Activated CD8-positive, alpha-beta memory T cell treated with anti-CD3 and anti-CD28 coated beads, Interleukin-2, amount 10 ng/mL, durations not matched to agents 7 days and 5 days (primary cell): ENCODE measurements at regions of chr12 and their contacts with region 1.

Region 1: DNA sequence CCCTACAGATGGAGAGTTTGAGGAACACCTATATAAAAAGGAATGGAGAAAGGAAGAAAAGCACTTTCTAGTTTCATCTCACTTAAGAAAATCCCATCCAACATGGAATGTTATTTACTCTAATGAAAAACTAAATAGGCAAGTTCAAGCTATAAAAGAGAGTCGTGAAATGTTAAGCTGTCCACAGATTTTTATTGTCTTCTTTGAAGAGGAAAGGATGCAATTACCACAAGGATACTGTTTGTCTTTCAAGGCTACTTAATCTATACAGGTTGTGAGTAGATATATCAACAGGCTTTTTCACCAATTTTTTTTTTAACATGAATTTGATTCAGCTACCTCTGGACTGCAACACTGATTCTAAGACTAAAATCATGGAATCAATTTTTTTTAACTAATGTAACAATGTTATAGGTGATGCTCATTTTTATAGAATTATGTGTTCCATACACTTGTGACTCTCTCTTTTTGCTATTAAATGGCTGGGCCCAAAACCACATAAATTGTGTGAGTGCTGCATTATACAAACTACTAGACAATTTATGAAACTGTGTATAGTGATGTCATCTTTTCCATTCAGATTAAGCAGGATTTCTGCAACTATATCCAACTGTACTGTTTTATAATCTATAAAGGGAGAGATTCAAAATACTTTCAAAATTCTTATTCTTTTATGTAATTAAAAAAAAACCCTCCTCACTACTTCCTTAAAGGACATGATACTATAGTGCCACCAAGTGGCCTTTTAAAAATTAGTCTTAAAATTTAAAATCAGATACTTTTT is 26.8 kb upstream of the BMAL2 start:
- DNase-seq: no peak
- ATAC-seq: no peak
- H3K4me3 Mint-ChIP-seq: no peak overlapping the region
- H3K27ac Mint-ChIP-seq: no peak overlapping the region
- H3K4me1 Mint-ChIP-seq: peaks cover 26% of the 10 kb centered on the region
- H3K27me3 Mint-ChIP-seq: no peaks in the 10 kb centered on the region

Region 2: DNA sequence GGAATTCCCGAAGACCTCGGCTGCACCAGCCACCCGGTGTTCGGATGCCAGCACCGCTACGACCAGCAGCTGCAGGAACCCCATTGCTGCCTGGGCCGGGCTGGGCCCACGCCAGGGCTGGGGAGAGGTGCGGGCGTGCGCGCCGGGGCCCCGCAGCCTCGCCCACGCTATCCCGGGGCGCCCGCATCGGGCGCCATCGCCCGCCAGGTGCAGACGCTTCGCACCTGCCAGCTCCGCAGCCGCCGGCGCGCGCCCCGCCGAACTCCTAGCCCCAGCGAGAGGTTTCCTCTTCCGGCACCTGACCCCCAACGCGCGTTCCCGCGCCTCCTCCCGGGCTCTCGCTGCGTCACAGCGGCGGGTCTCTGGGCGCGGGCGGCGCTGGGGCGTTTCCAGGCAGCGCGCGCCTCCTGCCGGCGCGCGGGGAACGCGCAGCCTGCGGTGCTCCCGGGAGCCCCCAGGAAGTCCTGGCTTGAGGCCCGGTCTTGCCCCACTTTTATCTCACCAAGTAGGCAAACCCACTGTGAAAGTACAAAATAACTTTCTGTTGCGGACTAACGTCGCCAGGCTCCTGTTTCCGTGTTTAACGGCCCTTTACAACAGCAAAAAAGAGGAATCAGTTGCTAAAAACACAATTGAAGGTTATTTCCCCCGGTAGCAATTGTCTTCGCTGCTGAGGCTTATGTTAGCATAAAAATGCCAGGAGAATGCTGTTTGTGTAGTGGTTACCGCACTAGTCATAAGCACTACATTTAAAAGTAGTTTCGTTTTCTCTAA is 291.6 kb before region 1 on chr12 and contains the start of gene TM7SF3:
- CTCF ChIA-PET with region 1: interaction called, 77 read pairs
- DNase-seq: peak; percentile 97
- ATAC-seq: peak; percentile 89
- H3K4me3 Mint-ChIP-seq: peak within 1 kb of the TSS; percentile 91
- H3K27ac Mint-ChIP-seq: peak within 1 kb of the TSS; percentile 94
- H3K4me1 Mint-ChIP-seq: peaks cover 61% of the 10 kb centered on the region
- H3K27me3 Mint-ChIP-seq: no peaks in the 10 kb centered on the region
- total RNA-seq, gene TM7SF3: 41.4 to 45.1 TPM

Region 3: DNA sequence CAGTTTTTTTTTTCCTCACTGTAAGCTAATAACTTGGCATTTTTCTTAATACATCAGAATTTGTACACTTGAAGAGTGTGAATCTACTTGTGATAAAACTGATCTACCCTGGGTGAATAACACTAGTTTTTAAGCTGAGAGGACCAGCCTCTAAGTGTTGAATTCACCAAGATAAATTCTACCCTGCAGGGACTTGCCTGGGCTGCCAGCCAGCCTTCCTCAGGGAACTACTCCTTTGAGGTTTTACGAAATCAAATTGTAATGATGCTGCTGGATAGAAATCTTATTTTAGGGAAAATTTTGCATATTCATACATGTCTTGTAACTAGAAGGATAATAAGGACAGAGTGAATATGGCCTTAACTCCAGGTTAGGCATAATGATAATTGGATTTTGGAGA is 281.6 kb before region 1 on chr12:
- CTCF ChIA-PET with region 1: interaction called, 31 read pairs
- DNase-seq: no peak
- ATAC-seq: no peak
- H3K4me3 Mint-ChIP-seq: no peak overlapping the region
- H3K27ac Mint-ChIP-seq: no peak overlapping the region
- H3K4me1 Mint-ChIP-seq: peaks cover 33% of the 10 kb centered on the region
- H3K27me3 Mint-ChIP-seq: peaks cover 2% of the 10 kb centered on the region

Region 4: DNA sequence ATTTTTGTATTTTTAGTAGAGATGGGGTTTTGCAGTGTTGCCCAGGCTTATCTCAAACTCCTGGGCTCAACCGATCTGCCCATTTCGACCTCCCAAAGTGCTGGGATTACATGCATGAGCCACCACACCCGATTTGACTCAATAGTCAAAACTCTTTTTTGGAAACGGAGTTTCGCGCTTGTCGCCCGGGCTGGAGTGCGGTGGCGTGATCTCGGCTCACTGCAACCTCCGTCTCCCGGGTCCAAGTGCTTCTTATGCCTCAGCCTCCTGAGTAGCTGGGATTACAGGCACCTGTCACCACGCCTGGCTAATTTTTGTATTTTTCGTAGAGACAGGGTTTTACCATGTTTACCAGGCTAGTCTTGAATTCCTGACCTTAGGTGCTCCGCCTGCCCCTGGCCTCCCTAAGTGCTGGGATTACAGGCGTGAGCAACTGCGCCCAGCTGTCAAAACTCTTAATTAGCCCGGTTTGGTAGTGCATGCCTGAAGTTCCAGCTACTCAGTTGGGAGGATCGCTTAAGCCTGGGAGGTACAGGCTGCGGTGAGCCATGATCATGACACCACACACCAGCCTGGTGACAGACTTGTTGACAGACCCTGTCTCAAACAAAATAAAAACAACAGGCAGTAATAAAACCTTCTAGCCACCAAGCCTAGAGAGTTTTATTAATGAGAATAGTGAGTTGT is 271.1 kb before region 1 on chr12:
- CTCF ChIA-PET with region 1: interaction called, 25 read pairs
- DNase-seq: no peak
- ATAC-seq: no peak
- H3K4me3 Mint-ChIP-seq: no peak overlapping the region
- H3K27ac Mint-ChIP-seq: no peak overlapping the region
- H3K4me1 Mint-ChIP-seq: peaks cover 4% of the 10 kb centered on the region
- H3K27me3 Mint-ChIP-seq: no peaks in the 10 kb centered on the region

Region 5: GRCh38 chr12:27226407-27226929 is 79.4 kb before region 1 on chr12:
- CTCF ChIA-PET with region 1: no interaction called
- DNase-seq: no peak
- ATAC-seq: no peak
- H3K4me3 Mint-ChIP-seq: no peak overlapping the region
- H3K27ac Mint-ChIP-seq: no peak overlapping the region
- H3K4me1 Mint-ChIP-seq: peaks cover under 1% of the 10 kb centered on the region
- H3K27me3 Mint-ChIP-seq: peaks cover 4% of the 10 kb centered on the region

Region 6: DNA sequence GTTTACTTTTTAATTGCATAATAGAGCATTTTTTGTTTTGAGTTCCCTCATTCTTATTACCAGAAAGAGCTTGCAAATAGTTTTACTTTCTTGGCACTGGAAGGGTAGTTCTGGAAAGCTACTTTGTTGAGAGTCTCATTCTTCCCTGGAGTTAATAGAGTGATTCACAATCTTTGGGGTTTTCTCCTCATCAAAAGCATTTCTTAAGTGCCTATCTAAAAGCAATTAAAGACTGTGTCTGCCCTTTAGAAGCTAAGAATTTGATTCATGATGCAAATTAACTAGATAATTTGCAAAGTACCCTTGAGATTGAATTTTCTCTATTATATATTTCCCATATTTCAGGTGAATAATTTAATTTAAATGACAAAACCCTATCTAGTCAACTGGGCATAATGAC is 18.7 kb after region 1 on chr12:
- CTCF ChIA-PET with region 1: interaction called, 41 read pairs
- DNase-seq: no peak
- ATAC-seq: no peak
- H3K4me3 Mint-ChIP-seq: no peak overlapping the region
- H3K27ac Mint-ChIP-seq: no peak overlapping the region
- H3K4me1 Mint-ChIP-seq: no peaks in the 10 kb centered on the region
- H3K27me3 Mint-ChIP-seq: no peaks in the 10 kb centered on the region

Region 7: DNA sequence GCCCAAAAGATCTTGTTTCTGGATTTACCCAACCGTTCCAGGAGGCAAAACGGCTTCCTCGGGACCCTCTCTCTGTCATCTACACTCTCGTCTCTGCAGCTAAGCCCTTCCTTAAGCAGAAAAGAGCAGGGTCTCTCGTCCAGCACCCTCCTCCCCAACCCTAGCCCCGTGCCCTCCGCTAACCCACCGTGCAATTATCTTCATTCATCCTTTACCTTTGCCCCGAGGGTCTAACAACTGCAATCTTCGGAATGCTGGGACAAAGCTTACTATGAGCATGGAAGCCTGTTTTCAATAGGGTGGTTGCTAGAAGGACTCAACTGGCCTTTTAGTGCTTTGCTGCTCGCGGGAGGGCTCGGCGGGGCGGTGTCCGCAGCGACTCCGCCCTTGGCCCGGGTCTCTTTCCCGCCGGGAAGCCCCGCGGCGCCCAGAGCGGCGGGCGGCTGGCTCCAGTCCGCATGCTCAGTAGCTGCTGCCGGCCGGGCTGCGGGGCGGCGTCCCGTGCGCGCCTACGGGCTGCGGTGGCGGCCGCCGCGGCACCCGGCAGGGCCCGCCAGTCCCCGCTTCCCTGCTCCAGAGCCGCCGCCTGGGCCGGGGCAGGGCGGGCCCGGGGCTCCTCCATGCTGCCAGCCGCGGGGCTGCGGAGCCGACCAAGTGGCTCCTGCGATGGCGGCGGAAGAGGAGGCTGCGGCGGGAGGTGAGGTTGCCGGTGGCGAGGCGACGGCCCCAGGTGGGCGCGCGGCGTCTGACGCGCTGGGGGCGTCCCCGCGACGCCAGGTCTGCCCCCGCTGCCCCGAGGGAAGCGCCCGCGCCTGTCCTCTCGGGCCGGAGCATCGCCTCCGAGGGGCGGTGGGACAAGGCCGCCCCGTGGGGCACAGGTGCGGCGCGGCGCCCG is 26.8 kb after region 1 on chr12 and contains the start of gene BMAL2:
- CTCF ChIA-PET with region 1: interaction called, 41 read pairs
- DNase-seq: peak; percentile 59
- ATAC-seq: peak; percentile 59
- H3K4me3 Mint-ChIP-seq: peak within 1 kb of the TSS; percentile 83
- H3K27ac Mint-ChIP-seq: peak within 1 kb of the TSS; percentile 86
- H3K4me1 Mint-ChIP-seq: peaks cover 46% of the 10 kb centered on the region
- H3K27me3 Mint-ChIP-seq: peaks cover 7% of the 10 kb centered on the region
- total RNA-seq, gene BMAL2: 23.1 to 38.4 TPM

Region 8: DNA sequence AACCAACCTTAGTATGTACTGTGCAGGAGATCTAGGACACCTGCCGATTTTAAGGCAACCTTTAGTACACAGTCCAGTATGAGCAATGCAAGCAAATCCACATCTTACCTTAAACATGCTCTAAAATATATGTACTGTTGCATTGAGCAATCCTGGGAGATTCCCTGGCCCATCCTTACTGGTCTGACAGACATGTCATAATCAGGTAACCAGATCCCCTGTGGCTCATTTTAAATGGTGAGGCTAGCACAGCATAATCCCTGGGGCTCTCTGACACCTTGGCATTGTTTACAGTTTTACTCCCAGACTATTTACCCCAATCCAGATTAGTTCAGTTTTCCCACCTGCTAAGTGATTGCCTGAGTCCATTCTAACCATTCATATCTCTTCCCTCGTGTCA is 41.9 kb after region 1 on chr12:
- CTCF ChIA-PET with region 1: no interaction called
- DNase-seq: no peak
- ATAC-seq: no peak
- H3K4me3 Mint-ChIP-seq: no peak overlapping the region
- H3K27ac Mint-ChIP-seq: no peak overlapping the region
- H3K4me1 Mint-ChIP-seq: no peaks in the 10 kb centered on the region
- H3K27me3 Mint-ChIP-seq: no peaks in the 10 kb centered on the region